ENCODE measurements at regions of chr6 and their contacts with region 1.

Region 1: DNA sequence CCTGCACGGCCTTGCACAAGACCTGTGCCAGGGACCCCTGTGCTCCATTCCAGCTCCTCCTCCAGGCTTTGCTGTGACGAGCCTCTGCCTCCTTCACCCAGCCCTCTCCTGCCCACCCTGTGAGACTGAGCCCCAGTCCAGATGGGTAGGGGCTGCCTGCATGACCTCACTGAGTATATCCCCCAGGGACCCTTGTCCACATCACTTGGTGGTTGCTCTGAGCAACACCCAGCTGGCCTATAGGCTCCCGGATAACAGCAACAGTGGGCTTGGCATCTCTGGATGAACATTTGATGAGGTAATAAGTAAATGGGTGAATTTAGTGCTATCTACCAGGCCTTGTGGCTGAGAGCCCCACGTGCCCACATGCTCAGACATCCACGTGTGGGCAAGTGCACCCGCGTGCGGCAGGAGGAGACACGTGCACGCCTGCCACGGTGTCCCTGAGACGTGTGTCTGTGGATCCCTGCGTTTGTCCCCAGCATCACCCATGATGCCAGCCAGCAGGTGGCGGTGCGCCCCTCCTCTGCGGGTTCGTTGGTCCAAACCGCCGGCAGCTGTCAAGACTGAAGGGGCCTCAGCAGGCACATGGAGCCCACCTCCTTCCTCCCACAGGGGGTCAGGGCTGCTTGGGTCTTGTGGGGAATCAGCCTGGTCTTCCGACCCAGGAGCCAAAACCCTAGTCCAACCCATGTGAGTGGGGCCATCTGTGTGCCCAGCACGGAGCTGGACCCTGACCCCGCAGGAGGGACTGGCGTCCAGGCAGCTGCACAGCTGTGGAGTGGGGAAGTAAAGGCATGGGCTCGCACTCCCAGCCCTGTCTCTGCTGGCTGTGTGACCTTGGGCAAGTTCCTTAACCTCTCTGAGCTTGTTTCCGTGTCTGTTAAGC is 45.9 kb downstream of the FGD2 start:
- DNase-seq: peak; percentile 93
- H3K4me3 ChIP-seq: no peak overlapping the region; a peak in 1 of 4 replicates
- H3K27ac ChIP-seq: no peak overlapping the region
- H3K4me1 ChIP-seq: peaks cover 0 to 14% of the 10 kb centered on the region in 2 experiments; a peak in 1 of 4 replicates
- H3K27me3 ChIP-seq: no peaks in the 10 kb centered on the region
- CTCF ChIP-seq: peak; percentile 85
- EP300 ChIP-seq: no peak
- RAD21 ChIP-seq: peak; percentile 98

Region 2: DNA sequence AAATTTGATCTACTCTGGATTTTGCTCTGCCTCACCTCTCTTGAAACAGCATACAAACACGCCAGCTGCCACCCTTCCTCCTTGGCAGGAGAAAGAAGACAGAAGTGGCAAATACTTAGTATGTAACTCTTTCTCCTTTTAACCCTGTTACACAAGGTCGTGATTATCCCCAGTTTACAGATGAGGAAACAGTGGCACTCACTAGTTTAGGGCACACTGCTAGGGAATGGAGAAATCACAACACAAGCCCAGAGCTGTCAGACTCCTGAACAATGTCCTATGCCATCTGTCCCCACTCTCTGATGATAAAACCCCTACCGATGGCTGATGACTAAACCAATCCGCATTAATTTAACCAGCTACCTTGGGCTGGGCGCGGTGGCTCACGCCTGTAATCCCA is 33.8 kb after region 1 on chr6:
- CTCF ChIA-PET with region 1: interaction called, 12 read pairs
- POLR2A ChIA-PET with region 1: no interaction called
- DNase-seq: no peak
- H3K4me3 ChIP-seq: no peak overlapping the region
- H3K27ac ChIP-seq: no peak overlapping the region
- H3K4me1 ChIP-seq: peaks cover 0 to 9% of the 10 kb centered on the region in 2 experiments; a peak in 1 of 4 replicates
- H3K27me3 ChIP-seq: no peaks in the 10 kb centered on the region
- CTCF ChIP-seq: no peak
- EP300 ChIP-seq: no peak
- RAD21 ChIP-seq: no peak

Region 3: DNA sequence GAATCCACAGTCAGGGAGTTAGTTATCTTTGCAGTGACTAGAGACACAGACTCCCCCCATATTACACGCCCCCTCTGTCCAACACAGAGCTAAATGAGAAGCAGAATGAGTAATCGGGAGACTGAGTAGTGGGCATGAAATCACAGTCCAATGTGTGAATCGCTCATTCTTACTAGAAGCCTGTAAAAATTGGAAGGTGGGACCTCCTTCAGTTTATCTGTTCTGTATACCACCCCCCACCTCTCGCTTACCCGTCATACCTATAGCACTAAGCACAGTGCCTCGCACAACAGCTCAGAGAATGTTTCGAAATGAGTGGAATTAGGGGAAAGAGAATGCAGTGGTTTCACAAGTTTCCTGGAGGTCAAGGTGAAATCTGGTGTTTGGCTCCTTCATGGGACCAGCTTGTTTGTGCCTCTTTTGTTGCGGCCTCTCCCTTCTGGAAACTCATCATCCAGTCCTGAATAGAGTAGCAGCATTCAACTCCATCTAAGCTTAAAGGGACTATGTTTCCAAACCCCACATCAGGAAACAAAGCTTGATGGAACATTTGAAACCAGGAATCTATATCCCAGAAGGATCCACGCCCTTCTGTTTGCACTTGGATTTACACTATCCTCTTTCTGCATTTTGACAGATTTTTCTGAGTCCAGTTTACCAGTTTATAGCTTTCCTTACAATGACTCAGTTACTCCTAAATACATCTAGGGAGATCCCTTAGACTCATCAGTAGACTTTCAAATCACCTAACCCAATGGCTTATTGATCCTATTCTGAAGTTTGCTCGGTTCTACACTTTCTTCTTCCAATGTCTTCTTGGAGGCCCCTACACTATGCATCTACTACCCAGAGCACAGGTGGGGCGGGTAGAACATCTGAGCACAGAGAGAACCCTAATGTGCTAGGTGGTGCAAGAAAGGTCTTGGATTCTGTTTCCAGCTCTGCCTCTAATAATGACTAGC is 59.4 kb after region 1 on chr6:
- CTCF ChIA-PET with region 1: interaction called, 29 read pairs
- POLR2A ChIA-PET with region 1: no interaction called
- DNase-seq: no peak
- H3K4me3 ChIP-seq: no peak overlapping the region
- H3K27ac ChIP-seq: no peak overlapping the region
- H3K4me1 ChIP-seq: peaks cover 0 to 10% of the 10 kb centered on the region in 2 experiments; a peak in 1 of 4 replicates
- H3K27me3 ChIP-seq: no peaks in the 10 kb centered on the region
- CTCF ChIP-seq: no peak
- EP300 ChIP-seq: 0 out of 4 replicates have a peak, but pooled peaks of 1 of the 2 experiments have one; percentile 9
- RAD21 ChIP-seq: no peak

Region 4: GRCh38 chr6:37160922-37161778 is 109.8 kb after region 1 on chr6:
- CTCF ChIA-PET with region 1: interaction called, 20 read pairs
- POLR2A ChIA-PET with region 1: no interaction called
- DNase-seq: no peak
- H3K4me3 ChIP-seq: no peak overlapping the region
- H3K27ac ChIP-seq: peak overlapping the region in 1 of 2 experiments; percentile 68; a peak in 2 of 4 replicates
- H3K4me1 ChIP-seq: peaks cover 3 to 12% of the 10 kb centered on the region in 2 experiments; a peak in 3 of 4 replicates
- H3K27me3 ChIP-seq: no peaks in the 10 kb centered on the region
- CTCF ChIP-seq: no peak
- EP300 ChIP-seq: no peak
- RAD21 ChIP-seq: no peak

Region 5: GRCh38 chr6:37207903-37208456 is 156.6 kb after region 1 on chr6:
- CTCF ChIA-PET with region 1: interaction called, 52 read pairs
- POLR2A ChIA-PET with region 1: no interaction called
- DNase-seq: peak; percentile 61
- H3K4me3 ChIP-seq: no peak overlapping the region
- H3K27ac ChIP-seq: no peak overlapping the region
- H3K4me1 ChIP-seq: peaks cover 0 to 2% of the 10 kb centered on the region in 2 experiments; a peak in 1 of 4 replicates
- H3K27me3 ChIP-seq: no peaks in the 10 kb centered on the region
- CTCF ChIP-seq: peak; percentile 77
- EP300 ChIP-seq: no peak
- RAD21 ChIP-seq: peak; percentile 58

Measured in SK-N-SH (cell line).